Activated B cell treated with CpG ODN at 0.5 μM for 24 hours (primary cell): ENCODE measurements at regions of chr10 and their contacts with region 1.

Region 1: DNA sequence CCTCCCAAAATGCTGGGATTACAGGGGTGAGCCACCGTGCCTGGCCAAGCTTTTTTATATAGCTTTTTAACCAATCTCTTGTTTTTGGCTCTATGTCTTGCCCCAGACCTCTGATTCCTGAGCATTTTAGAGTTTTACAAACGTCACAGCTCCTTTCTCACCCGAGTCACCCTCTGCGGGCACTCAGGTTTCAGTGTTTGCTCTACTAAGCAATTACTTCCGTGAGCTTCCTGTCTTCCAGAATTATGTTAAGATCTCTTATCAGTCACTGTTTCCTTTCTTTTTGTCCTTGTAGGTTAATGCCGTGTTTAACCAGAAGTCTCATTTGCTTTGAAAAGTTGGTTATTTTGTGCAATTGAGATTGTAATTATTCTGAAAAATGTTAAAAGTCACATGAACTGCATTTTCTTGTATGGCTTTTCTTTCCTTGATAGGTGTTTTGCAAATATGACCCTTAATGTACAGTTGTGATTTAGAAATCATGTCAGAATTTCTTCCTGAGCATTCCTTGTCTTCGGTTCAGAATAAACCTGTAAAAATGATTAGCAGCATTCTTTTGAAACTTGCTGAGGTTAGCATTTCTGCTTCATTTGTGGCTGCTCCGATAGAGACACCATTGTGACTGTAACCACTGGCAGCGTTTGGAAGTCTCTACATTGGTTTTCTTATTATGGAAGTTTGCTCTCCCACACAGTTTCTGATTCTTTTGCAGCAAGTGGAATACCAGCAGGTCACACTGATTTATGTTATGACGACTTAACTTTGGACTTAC is 4.5 kb upstream of the HKDC1 start:
- DNase-seq: no peak
- ATAC-seq: no peak
- H3K4me3 Mint-ChIP-seq: no peak overlapping the region
- H3K27ac Mint-ChIP-seq: no peak overlapping the region
- H3K4me1 Mint-ChIP-seq: peaks cover 2% of the 10 kb centered on the region
- H3K27me3 Mint-ChIP-seq: peaks cover 2% of the 10 kb centered on the region
- CTCF ChIP-seq: no peak

Region 2: DNA sequence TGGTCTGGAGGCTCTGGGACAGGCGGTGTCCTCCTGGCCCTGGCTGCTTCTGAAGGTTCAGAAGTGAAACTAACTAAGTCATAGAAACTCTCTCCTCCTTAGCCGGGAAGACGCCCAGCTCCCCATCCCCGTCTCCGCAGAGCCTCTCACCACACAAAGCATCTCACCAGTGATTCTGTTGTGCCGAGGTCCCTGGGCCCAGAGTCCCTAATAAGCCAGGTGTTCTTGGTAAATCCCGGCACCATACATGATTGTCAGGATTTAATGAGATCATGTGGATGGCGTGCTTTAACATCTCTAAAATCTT is 14.0 kb after region 1 on chr10:
- CTCF ChIA-PET with region 1: interaction called, 3 read pairs
- POLR2A ChIA-PET with region 1: interaction called, 12 read pairs
- intact Hi-C with region 1: no loop called
- DNase-seq: no peak
- ATAC-seq: no peak
- H3K4me3 Mint-ChIP-seq: peak overlapping the region; percentile 64
- H3K27ac Mint-ChIP-seq: peak overlapping the region; percentile 74
- H3K4me1 Mint-ChIP-seq: peaks cover 40% of the 10 kb centered on the region
- H3K27me3 Mint-ChIP-seq: no peaks in the 10 kb centered on the region
- CTCF ChIP-seq: no peak

Region 3: GRCh38 chr10:69416695-69417094 is 201.1 kb after region 1 on chr10 and contains the start of gene TACR2:
- CTCF ChIA-PET with region 1: no interaction called
- POLR2A ChIA-PET with region 1: interaction called, 10 read pairs
- intact Hi-C with region 1: no loop called
- DNase-seq: no peak
- ATAC-seq: no peak
- H3K4me3 Mint-ChIP-seq: no peak within 1 kb of the TSS
- H3K27ac Mint-ChIP-seq: no peak within 1 kb of the TSS
- H3K4me1 Mint-ChIP-seq: peaks cover 2% of the 10 kb centered on the region
- H3K27me3 Mint-ChIP-seq: peaks cover 16% of the 10 kb centered on the region
- CTCF ChIP-seq: no peak
- total RNA-seq, gene TACR2: not detected in 2 replicates